CD4-positive, alpha-beta T cell (primary cell): ENCODE measurements at regions of chr14 and their contacts with region 1.

Region 1: GRCh38 chr14:54698966-54699530 is 132.1 kb downstream of the SAMD4A start:
- DNase-seq: no peak
- ATAC-seq: no peak
- H3K4me3 ChIP-seq: no peak overlapping the region
- H3K4me3 Mint-ChIP-seq: no peak overlapping the region
- H3K27ac ChIP-seq: no peak overlapping the region
- H3K27ac Mint-ChIP-seq: no peak overlapping the region
- H3K4me1 ChIP-seq: no peaks in the 10 kb centered on the region
- H3K4me1 Mint-ChIP-seq: no peaks in the 10 kb centered on the region
- H3K27me3 ChIP-seq: no peaks in the 10 kb centered on the region
- H3K27me3 Mint-ChIP-seq: peaks cover 17% of the 10 kb centered on the region
- CTCF ChIP-seq: no peak

Region 2: GRCh38 chr14:54329082-54329695 is 369.9 kb before region 1 on chr14:
- CTCF ChIA-PET with region 1: no interaction called
- POLR2A ChIA-PET with region 1: no interaction called
- intact Hi-C with region 1: no loop called
- DNase-seq: peak in 2 of 14 experiments; percentile 10 to 14
- ATAC-seq: no peak
- H3K4me3 ChIP-seq: no peak overlapping the region
- H3K4me3 Mint-ChIP-seq: no peak overlapping the region
- H3K27ac ChIP-seq: no peak overlapping the region
- H3K27ac Mint-ChIP-seq: no peak overlapping the region
- H3K4me1 ChIP-seq: no peaks in the 10 kb centered on the region
- H3K4me1 Mint-ChIP-seq: no peaks in the 10 kb centered on the region
- H3K27me3 ChIP-seq: peaks cover 0 to 6% of the 10 kb centered on the region in 2 experiments
- H3K27me3 Mint-ChIP-seq: peaks cover 51% of the 10 kb centered on the region
- CTCF ChIP-seq: no peak

Region 3: GRCh38 chr14:54756656-54757392 is 57.8 kb after region 1 on chr14:
- CTCF ChIA-PET with region 1: interaction called, 3 read pairs
- POLR2A ChIA-PET with region 1: no interaction called
- intact Hi-C with region 1: loop called in 1 of 2 experiments (anchors 5 kb)
- DNase-seq: no peak
- ATAC-seq: no peak
- H3K4me3 ChIP-seq: no peak overlapping the region
- H3K4me3 Mint-ChIP-seq: no peak overlapping the region
- H3K27ac ChIP-seq: no peak overlapping the region
- H3K27ac Mint-ChIP-seq: no peak overlapping the region
- H3K4me1 ChIP-seq: peaks cover 6% of the 10 kb centered on the region
- H3K4me1 Mint-ChIP-seq: peaks cover 11% of the 10 kb centered on the region
- H3K27me3 ChIP-seq: no peaks in the 10 kb centered on the region
- H3K27me3 Mint-ChIP-seq: no peaks in the 10 kb centered on the region
- CTCF ChIP-seq: no peak